ENCODE measurements at regions of chr6 and their contacts with region 1.

Region 1: DNA sequence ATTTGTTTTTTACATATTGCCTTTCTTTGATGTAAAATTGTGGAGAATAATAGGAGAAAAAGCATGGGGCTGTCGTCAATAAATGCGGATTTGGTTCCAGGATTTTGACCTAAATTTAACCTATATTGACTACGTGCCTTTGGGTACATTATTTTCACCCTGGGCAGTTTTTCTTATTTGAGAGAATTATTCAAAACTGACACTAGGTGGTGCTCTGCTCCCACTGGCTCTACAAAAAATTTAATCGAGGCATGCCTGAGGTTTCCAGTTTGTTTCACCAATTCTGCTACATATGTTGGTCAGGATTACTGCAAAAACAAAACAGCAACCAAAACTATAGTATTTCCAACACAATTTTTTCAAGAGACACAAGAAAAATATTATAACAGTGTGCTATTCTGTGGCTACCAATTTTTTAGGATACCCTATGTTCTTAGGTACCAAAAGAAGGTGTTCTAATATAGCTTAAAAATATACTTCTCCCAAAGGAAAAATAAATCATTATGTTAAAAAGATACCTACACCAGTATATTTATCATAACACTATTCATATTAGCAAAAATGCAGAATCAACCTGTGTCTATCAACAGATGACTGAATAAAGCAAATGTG is 48.6 kb upstream of the FABP7 start:
- DNase-seq: no peak
- H3K4me3 Mint-ChIP-seq: no peak overlapping the region
- H3K27ac Mint-ChIP-seq: no peak overlapping the region
- H3K4me1 Mint-ChIP-seq: no peaks in the 10 kb centered on the region
- H3K27me3 Mint-ChIP-seq: peaks cover 6% of the 10 kb centered on the region

Region 2: DNA sequence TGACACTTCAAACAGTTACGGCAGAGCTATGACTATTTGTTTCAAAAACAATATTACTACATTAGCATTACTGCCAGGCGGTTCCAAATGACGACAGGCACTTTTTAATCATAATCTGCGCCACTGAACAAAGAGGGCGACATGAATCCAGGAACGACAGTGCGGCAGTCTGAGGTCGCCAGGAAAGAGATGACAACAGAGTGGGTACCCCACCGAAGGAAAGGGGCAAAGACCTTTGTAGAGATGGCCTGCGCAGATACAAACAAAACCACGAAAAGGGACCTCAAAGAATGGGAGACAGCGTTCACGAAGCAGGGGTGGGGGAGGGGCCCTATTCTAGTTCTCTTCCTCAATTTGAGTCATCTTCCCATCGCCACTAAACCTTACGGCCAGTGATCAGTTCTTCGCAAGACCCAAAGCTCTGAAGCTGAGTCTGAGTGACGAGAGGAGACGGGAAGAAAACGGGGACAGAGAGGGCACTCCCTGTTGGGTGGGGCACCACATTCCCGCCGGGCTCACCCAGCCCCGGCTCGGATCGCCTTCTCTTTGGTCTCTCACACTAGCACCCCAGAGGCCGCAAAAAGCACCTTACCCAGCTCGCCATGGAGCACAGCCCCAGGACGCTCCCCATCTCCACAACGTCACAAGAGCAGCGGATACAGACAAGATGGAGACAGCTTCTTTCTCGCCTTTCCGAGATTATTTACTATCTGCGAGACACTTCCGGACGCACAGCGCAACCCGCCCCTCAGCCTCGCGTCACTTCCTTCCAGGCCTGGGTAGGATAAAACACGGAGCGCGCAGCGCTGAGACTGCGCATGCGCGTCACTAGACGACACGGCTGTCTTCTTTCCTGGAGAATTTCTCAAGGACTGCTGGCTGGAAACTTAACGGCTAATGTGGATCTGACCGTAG is 259.5 kb before region 1 on chr6 and contains the start of gene SERINC1:
- intact Hi-C with region 1: loop called (anchors 10 kb)
- DNase-seq: peak; percentile 88
- H3K4me3 Mint-ChIP-seq: peak within 1 kb of the TSS; percentile 99
- H3K27ac Mint-ChIP-seq: peak within 1 kb of the TSS; percentile 99
- H3K4me1 Mint-ChIP-seq: peaks cover 22% of the 10 kb centered on the region
- H3K27me3 Mint-ChIP-seq: no peaks in the 10 kb centered on the region
- total RNA-seq, gene SERINC1: 44.0 and 46.4 TPM in 2 replicates

Region 3: GRCh38 chr6:122491919-122492555 is 238.8 kb before region 1 on chr6:
- intact Hi-C with region 1: loop called (anchors 5 kb)
- DNase-seq: peak; percentile 49
- H3K4me3 Mint-ChIP-seq: no peak overlapping the region
- H3K27ac Mint-ChIP-seq: no peak overlapping the region
- H3K4me1 Mint-ChIP-seq: peaks cover 5% of the 10 kb centered on the region
- H3K27me3 Mint-ChIP-seq: peaks cover 1% of the 10 kb centered on the region

Region 4: DNA sequence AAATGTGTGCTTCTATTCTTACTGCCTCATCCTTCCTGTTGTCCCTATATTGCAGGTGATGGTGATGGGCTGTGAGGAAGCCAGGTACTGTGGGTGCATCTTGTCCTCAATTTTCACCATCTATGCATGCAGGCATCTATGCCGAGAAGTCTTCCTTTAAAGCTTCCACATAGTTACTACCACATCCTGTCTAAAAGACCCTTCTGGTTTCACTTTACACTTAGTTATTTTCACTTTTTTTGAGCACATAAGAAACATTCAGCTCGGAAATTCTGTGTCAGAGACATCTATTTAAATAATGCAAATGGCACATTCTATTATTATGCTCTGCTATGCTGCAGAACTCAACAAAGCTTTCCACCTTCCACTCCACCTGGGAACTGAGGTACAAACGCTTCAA is 20.4 kb after region 1 on chr6:
- intact Hi-C with region 1: no loop called
- DNase-seq: no peak
- H3K4me3 Mint-ChIP-seq: no peak overlapping the region
- H3K27ac Mint-ChIP-seq: peak overlapping the region; percentile 34
- H3K4me1 Mint-ChIP-seq: peaks cover 19% of the 10 kb centered on the region
- H3K27me3 Mint-ChIP-seq: no peaks in the 10 kb centered on the region

Region 5: DNA sequence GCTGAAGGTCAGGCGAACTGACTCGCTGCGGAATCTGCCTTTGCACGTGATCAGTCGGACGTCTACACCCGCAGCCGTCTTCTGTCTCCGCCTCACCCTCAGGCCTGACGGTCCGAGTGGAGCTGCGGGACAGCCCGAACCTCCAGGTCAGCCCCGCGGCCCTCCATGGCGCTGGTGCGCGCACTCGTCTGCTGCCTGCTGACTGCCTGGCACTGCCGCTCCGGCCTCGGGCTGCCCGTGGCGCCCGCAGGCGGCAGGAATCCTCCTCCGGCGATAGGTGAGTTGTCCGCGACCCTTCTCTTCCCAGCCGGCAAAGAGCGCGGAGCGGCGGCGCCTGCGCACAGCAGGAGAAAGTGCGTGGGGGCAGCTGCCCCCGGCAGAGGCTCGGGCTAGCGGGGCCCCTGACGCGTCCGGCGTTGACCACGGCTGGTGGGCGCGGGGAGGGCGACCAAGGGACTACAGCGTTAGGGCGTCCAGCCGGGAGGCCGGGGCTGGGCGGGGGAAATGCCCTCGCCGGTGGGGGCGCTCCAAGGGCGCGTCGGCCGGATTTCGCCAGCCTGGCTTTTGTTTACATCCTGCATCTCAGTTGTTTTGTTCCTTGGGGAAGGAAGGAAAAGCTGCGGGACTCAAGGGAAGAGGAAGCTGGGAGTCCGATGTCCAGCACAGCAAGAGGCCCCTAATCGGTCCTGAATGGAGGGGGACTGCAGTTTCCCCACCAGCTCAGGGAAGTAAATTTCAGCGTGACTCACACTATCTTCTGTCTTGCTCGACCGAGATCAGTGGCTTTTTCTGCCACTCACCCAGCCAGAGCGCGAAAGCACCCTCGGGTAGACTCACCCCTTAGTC is 58.5 kb after region 1 on chr6 and contains the start of gene SMPDL3A:
- intact Hi-C with region 1: loop called (anchors 5 kb)
- DNase-seq: peak; percentile 11
- H3K4me3 Mint-ChIP-seq: peak within 1 kb of the TSS; percentile 93
- H3K27ac Mint-ChIP-seq: peak within 1 kb of the TSS; percentile 86
- H3K4me1 Mint-ChIP-seq: peaks cover 23% of the 10 kb centered on the region
- H3K27me3 Mint-ChIP-seq: peaks cover 59% of the 10 kb centered on the region
- total RNA-seq, gene SMPDL3A: 1.3 and 1.6 TPM in 2 replicates

Region 6: GRCh38 chr6:122839477-122839876 is 108.6 kb after region 1 on chr6:
- intact Hi-C with region 1: loop called (anchors 1 kb)
- DNase-seq: peak; percentile 20
- H3K4me3 Mint-ChIP-seq: no peak overlapping the region
- H3K27ac Mint-ChIP-seq: no peak overlapping the region
- H3K4me1 Mint-ChIP-seq: no peaks in the 10 kb centered on the region
- H3K27me3 Mint-ChIP-seq: peaks cover 8% of the 10 kb centered on the region

Region 7: DNA sequence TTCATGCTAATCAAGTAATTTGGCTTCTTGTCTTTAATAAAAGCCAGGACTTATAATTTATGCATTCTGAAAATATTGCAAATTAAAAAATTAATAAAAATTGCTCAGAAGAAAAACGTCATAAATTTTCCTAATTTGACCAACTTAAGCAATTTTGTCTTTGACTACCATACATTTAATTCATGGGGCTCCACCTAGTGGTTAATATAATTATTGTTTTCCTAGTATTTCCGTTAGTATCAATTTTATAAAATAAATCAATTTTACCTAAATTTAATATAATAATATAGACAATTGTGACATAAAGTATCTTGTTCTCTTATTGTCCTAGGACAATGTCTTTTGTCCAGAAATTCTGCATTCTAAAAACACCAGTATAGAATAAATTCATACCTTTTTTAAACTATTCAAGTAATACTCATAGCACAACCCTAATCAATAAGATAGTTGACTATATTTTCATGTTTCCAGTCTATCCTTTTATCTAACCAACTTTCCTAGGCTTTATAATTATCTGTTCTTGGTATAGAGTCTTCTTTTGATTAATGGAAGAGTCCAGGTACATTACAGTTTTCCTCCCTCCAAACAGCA is 585.9 kb after region 1 on chr6:
- intact Hi-C with region 1: loop called (anchors 2 kb)
- DNase-seq: no peak
- H3K4me3 Mint-ChIP-seq: no peak overlapping the region
- H3K27ac Mint-ChIP-seq: no peak overlapping the region
- H3K4me1 Mint-ChIP-seq: no peaks in the 10 kb centered on the region
- H3K27me3 Mint-ChIP-seq: no peaks in the 10 kb centered on the region

Measured in activated T-helper 2 cell treated with anti-CD3 and anti-CD28 coated beads, Interferon-gamma antibody, Interleukin-2, Interleukin-4, amounts not matched to agents 10 μg/mL and 5 μg/mL and 100 μg/mL, durations not matched to agents 14 hours and 24 hours and 36 hours (primary cell).